Common myeloid progenitor, CD34-positive (primary cell): ENCODE measurements at regions of chr12 and their contacts with region 1.

Region 1: DNA sequence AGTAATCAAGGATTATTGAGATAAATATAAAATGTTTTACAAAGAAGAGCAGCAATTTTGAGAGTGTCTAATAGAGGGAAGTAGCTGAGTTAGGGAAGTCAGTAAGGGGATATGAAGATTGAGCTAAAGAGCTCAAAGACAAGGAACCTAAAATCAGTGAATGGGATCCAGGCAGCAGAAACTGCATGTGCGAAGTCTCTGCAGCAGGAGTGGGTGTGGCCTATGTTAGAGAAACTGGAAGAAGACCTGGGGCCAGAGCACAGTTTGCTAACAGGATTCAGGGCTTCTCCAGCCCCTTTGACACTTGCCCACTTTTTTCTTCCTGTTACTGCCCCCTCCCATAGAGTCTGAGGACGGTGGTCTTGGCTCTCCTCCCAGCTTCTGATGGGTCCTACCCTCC is 36.2 kb upstream of the PLXNC1 start:
- DNase-seq: peak in 2 of 3 donors; percentile 64 to 65
- H3K4me3 ChIP-seq: no peak overlapping the region
- H3K27ac ChIP-seq: no peak overlapping the region
- H3K4me1 ChIP-seq: peaks cover 0 to 10% (median 7%) of the 10 kb centered on the region in 4 experiments
- H3K27me3 ChIP-seq: no peaks in the 10 kb centered on the region

Region 2: DNA sequence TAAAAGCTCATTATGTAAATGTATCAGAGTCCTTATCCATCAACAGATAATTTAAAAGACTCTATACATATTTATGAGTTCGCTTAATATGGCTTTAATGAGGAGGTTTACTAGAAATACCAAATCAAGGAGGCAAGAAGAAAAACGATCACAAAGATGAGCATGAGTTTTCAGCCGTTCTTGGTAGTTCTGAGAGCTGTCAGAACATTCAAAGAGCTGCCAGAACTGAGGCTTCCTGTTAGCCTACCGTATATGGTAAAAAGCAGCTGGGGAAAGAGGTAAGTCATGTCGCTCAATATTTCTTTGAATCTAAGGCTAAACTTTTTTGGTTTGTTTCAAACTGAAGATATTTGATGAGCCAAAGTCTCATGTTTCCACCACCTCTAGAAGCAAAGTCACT is 79.0 kb before region 1 on chr12:
- CTCF ChIA-PET with region 1: no interaction called
- POLR2A ChIA-PET with region 1: no interaction called
- DNase-seq: no peak
- H3K4me3 ChIP-seq: no peak overlapping the region
- H3K27ac ChIP-seq: no peak overlapping the region
- H3K4me1 ChIP-seq: peaks cover 0 to 6% (median 0%) of the 10 kb centered on the region in 4 experiments
- H3K27me3 ChIP-seq: no peaks in the 10 kb centered on the region

Region 3: GRCh38 chr12:94092516-94093241 is 19.5 kb before region 1 on chr12:
- CTCF ChIA-PET with region 1: no interaction called
- POLR2A ChIA-PET with region 1: no interaction called
- DNase-seq: no peak
- H3K4me3 ChIP-seq: no peak overlapping the region
- H3K27ac ChIP-seq: no peak overlapping the region
- H3K4me1 ChIP-seq: peaks cover 0 to 14% (median 4%) of the 10 kb centered on the region in 4 experiments
- H3K27me3 ChIP-seq: peaks cover 0 to 2% (median 0%) of the 10 kb centered on the region in 5 experiments

Region 4: DNA sequence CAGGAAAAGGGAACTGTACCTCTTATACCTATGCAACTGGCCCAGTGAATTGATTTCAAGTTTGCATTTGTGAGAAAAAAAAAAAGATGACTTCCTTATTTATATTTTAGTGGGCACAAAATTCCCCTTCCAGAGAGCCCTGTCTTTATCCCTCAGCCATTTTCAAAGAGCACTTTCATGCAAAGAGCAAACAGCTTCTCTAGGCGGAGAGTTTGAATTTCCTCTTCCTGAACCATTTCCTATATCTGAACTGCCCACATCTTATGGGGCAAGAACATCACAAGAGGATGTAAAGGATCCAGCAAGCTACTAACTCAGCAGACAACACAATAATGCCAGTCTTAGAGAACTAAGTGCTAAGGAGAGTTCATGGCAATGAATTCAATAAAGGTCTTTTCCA is 13.9 kb after region 1 on chr12:
- CTCF ChIA-PET with region 1: interaction called, 15 read pairs
- POLR2A ChIA-PET with region 1: no interaction called
- DNase-seq: peak in 1 of 3 donors; percentile 40
- H3K4me3 ChIP-seq: no peak overlapping the region
- H3K27ac ChIP-seq: no peak overlapping the region
- H3K4me1 ChIP-seq: peaks cover 41 to 62% (median 52%) of the 10 kb centered on the region in 4 experiments
- H3K27me3 ChIP-seq: no peaks in the 10 kb centered on the region